ENCODE measurements at regions of chr5 and their contacts with region 1.

Region 1: DNA sequence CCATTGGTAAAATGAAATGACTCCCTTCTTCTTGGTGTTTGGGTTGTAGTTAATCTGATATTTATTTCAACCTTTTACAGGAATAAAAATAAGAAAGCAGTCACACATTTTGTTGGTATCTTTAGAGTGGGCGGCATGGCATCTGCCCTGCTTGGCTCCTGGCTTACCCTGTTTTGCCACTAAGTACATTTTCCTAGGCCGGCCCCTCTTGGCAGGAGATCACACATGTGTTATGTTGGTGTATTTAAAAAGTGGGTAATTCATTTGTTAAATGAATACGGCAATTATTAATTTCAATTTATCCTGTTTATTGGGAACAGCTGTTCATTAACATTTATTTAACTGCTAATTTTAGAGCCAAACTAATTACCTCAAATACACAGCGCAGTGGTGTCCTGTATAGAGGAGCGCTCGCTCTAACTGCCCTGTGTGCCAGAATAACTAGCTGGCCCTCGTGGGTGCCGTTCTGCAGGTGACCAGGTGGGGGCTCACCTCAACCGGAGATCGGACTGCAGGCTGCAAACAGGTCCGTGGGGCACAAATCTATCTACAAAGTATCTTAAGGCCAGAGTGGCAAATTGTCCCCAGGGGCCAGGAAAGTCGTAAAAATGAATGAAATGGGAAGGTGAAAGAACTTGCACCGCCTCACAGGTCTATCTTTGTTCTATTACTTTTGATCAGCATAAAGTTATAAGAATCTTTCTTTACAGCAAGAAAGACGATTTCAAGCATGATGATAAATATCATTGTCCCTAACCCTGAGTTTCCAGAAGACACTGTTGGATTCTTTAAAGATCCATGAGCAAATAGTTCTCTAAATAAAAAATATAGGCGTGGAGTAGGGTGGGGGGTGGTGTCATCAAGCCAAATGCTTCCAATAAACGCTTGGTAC is 26.2 kb upstream of the GPR151 start:
- DNase-seq: peak; percentile 44
- H3K4me3 ChIP-seq: no peak overlapping the region
- H3K27ac ChIP-seq: no peak overlapping the region
- H3K4me1 ChIP-seq: peaks cover 4% of the 10 kb centered on the region
- H3K27me3 ChIP-seq: no peaks in the 10 kb centered on the region
- CTCF ChIP-seq: peak; percentile 96

Region 2: DNA sequence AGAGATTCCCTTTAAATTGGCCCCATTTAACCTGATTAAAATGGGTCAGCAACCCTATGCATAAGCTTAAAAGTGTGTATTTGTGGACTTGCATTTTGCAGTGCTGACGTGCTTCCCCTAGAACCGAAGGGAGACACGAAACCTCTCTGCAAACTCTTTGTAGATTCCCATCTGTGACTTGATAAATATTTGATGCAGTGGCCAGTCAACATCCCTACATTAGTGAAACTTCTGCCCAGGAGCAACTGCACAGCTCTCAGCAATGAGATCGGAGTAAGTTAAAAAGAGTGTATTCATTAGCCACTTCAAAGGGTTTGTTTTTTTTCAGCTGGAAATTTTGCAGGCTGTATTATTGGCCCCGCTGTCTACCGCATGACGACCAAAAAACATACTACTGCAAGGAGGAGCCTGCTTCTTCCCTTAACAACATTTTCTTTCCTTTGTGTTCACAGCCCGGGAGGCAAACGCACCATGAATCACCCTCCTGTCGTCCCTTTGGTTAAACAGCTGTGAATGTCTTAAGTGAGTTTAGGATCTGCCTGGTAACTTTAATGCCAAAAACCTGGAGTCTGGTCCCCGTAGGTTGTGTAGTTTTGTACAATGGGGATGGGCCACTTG is 133.0 kb before region 1 on chr5:
- CTCF ChIA-PET with region 1: no interaction called
- dilution Hi-C with region 1: no loop called
- in situ Hi-C with region 1: no loop called
- intact Hi-C with region 1: no loop called
- DNase-seq: peak; percentile 79
- H3K4me3 ChIP-seq: peak overlapping the region in 1 of 3 experiments; percentile 8
- H3K27ac ChIP-seq: no peak overlapping the region
- H3K4me1 ChIP-seq: peaks cover 11% of the 10 kb centered on the region
- H3K27me3 ChIP-seq: no peaks in the 10 kb centered on the region
- CTCF ChIP-seq: no peak

Region 3: DNA sequence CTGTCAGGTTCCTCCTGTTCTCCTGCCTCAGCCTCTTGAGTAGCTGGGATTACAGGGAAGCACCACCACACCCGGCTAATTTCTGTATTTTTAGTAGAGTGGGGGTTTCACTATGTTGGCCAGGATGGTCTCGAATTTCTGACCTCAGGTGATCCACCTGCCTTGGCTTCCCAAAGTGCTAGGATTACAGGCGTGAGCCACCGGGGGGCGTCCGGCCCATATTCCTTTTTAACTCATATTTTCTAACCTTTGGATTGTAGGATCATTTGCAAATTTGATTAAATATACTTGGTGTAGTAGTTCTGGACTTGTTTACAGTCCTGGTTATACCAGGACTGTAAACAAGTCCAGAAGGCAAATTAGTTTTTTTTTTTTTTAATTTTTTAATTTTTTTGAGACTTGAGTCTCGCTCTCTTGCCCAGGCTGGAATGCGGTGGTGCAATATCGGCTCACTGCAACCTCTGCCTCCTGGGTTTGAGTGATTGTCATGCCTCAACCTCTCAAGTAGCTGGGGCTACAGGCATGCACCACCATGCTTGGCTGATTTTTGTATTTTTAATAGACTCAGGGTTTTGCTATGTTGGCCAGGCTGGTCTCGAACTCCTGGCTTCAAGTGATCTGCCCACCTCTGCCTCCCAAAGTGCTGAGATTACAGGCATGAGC is 90.7 kb before region 1 on chr5:
- CTCF ChIA-PET with region 1: no interaction called
- dilution Hi-C with region 1: no loop called
- in situ Hi-C with region 1: no loop called
- intact Hi-C with region 1: no loop called
- DNase-seq: no peak
- H3K4me3 ChIP-seq: no peak overlapping the region
- H3K27ac ChIP-seq: no peak overlapping the region
- H3K4me1 ChIP-seq: peaks cover 10% of the 10 kb centered on the region
- H3K27me3 ChIP-seq: no peaks in the 10 kb centered on the region
- CTCF ChIP-seq: peak; percentile 12 to 20

Region 4: GRCh38 chr5:146490089-146490843 is 51.9 kb before region 1 on chr5:
- CTCF ChIA-PET with region 1: no interaction called
- dilution Hi-C with region 1: no loop called
- in situ Hi-C with region 1: no loop called
- intact Hi-C with region 1: no loop called
- DNase-seq: no peak
- H3K4me3 ChIP-seq: no peak overlapping the region
- H3K27ac ChIP-seq: no peak overlapping the region
- H3K4me1 ChIP-seq: no peaks in the 10 kb centered on the region
- H3K27me3 ChIP-seq: no peaks in the 10 kb centered on the region
- CTCF ChIP-seq: no peak

Region 5: DNA sequence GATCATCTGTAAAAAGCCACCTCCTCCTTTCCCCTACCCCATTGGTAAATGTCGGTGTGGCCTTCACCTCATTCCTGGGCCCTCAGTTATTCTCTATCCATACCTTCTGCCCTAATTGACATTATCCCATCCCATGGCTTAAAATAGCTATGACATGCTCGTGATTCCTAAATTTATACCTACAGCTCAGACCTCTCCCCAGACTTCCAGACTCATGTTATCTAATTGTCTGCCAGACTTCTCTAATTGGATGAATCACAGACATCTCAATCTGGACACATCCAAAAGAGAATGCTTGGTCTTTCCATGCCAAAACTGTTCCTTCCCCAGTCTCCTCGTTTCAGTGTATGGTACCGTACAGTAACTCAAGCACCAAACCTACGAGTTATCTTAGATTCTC is 86.7 kb after region 1 on chr5:
- CTCF ChIA-PET with region 1: no interaction called
- dilution Hi-C with region 1: no loop called
- in situ Hi-C with region 1: no loop called
- intact Hi-C with region 1: no loop called
- DNase-seq: no peak
- H3K4me3 ChIP-seq: no peak overlapping the region
- H3K27ac ChIP-seq: no peak overlapping the region
- H3K4me1 ChIP-seq: no peaks in the 10 kb centered on the region
- H3K27me3 ChIP-seq: no peaks in the 10 kb centered on the region
- CTCF ChIP-seq: no peak

Region 6: DNA sequence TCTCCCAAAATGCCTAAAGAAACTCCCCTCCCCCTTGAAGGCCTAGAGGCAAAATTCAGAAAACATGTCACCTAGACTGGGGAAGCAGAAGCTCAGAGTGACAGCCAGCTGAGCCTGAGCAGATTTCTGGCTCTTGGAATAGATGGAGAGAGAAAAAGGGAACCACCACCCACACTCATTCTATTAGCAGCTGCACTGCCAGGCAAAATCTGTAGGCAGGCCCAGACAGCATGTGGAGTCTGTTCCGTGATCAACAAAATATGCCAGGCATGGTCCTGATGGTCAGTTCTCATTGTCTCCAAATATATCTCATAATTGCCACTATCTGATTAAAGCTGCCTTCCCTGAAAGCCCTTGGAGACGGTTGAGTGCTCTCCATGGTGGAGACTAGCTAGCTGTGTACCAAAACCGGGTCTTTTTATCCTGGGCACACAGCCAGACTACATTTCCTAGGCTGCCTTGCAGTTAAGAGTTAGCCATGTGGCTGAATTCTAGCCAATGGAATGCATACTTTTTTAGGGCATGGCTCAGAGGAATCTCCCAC is 105.5 kb after region 1 on chr5:
- CTCF ChIA-PET with region 1: interaction called, 4 read pairs
- dilution Hi-C with region 1: no loop called
- in situ Hi-C with region 1: no loop called
- intact Hi-C with region 1: loop called (anchors 5 kb)
- DNase-seq: peak; percentile 22
- H3K4me3 ChIP-seq: no peak overlapping the region
- H3K27ac ChIP-seq: no peak overlapping the region
- H3K4me1 ChIP-seq: no peaks in the 10 kb centered on the region
- H3K27me3 ChIP-seq: no peaks in the 10 kb centered on the region
- CTCF ChIP-seq: no peak

Region 7: DNA sequence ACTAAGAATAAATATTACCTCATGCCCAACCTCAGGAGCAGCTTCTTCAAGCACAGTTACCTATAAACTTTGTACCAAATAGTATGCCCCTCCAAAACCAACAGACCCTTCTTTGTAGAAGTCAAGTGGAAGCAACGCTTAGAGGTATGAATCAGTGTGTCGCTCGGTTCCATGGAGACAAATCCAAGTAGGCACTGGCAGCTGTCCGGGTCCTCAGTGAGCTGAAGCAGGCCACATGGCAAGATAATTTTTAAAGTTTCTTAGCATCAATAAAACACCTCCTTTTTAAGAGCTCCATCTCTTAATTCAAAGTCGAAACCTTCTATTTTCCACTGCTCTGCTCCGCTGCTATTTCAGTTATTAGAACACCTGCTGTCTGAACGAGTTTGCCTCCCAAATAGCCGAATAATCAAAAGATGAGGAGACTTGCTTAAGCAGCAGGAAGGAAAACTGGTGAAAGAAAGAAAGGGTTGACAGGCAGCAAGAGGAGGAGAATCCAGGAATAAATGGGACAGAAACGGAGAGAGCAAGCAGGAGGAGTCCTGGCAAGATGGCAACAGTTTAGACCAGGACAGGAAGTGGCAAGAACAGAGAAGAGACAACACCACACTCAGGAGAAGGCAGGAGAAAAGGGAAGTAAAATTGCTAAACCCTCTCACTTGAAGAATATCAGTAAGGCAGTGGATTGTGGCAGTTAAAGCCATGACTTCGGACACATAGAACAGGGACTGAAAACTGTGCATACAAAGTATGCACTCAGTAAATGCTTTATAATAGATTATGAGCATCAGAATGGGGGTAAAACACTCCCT is 271.3 kb after region 1 on chr5:
- CTCF ChIA-PET with region 1: no interaction called
- dilution Hi-C with region 1: no loop called
- in situ Hi-C with region 1: no loop called
- intact Hi-C with region 1: loop called (anchors 10 kb)
- DNase-seq: no peak
- H3K4me3 ChIP-seq: no peak overlapping the region
- H3K27ac ChIP-seq: no peak overlapping the region
- H3K4me1 ChIP-seq: peaks cover 3% of the 10 kb centered on the region
- H3K27me3 ChIP-seq: no peaks in the 10 kb centered on the region
- CTCF ChIP-seq: no peak

Region 8: GRCh38 chr5:146971401-146971800 is 429.2 kb after region 1 on chr5:
- CTCF ChIA-PET with region 1: interaction called, 8 read pairs
- dilution Hi-C with region 1: no loop called
- in situ Hi-C with region 1: loop called (anchors 5 kb)
- intact Hi-C with region 1: loop called (anchors 1 kb)
- DNase-seq: no peak
- H3K4me3 ChIP-seq: no peak overlapping the region
- H3K27ac ChIP-seq: no peak overlapping the region
- H3K4me1 ChIP-seq: no peaks in the 10 kb centered on the region
- H3K27me3 ChIP-seq: no peaks in the 10 kb centered on the region
- CTCF ChIP-seq: no peak

Measured in mammary epithelial cell (primary cell).